ENCODE measurements at regions of chr11 and their contacts with region 1.

Region 1: DNA sequence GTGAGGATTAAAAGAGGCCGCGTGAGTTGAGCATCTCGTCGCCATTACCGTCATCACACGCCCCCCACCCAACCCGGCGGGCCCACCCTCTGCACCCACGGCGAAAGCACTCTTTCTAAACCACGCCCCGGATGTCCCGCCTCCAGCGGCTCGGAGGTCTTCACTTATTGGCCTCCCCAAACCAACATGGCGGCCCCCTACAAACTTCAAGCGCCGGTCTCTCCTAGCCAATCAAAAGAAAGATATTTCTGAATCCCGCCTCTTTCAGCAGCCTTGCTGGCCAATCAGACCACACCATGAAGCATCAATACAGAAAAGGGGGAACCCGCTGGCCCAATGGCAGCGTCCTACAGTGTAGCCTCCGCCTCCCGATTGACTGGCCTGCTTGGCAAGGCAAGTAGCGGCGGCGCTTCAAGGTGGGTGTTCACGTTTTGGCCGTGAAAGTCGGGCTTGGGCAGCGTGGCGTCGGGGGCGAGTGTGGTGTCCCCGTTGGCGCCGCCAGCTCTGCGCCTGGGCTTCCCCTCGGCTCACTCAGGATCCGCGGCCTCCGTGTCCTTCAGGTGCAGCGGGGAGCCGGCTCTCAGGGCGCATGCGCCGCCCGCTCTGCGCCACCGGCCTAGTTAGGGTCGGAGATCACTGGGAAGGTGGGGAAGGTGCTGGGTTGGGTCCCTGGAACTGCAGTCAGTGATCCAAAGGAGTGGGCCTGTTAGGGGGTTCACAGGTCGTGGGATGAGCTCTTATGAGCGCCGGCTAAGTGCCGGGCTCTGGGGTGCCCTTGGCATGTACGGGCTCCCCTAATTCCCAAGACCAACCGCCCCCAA is at the start of gene NDUFS8:
- DNase-seq: peak; percentile 90 to 98 (median 96)
- ATAC-seq: peak; percentile 95
- H3K4me3 ChIP-seq: peak within 1 kb of the TSS; percentile 73 to 90
- H3K4me3 Mint-ChIP-seq: peak within 1 kb of the TSS; percentile 97
- H3K27ac ChIP-seq: peak within 1 kb of the TSS; percentile 71 to 74
- H3K27ac Mint-ChIP-seq: peak within 1 kb of the TSS; percentile 92
- H3K4me1 ChIP-seq: peaks cover 14% of the 10 kb centered on the region
- H3K4me1 Mint-ChIP-seq: peaks cover 16% of the 10 kb centered on the region
- H3K27me3 ChIP-seq: no peaks in the 10 kb centered on the region
- H3K27me3 Mint-ChIP-seq: no peaks in the 10 kb centered on the region
- CTCF ChIP-seq: no peak
- total RNA-seq, gene NDUFS8: 59.4 to 63.2 TPM

Region 2: GRCh38 chr11:67118801-67119584 is 911.5 kb before region 1 on chr11 and contains the start of gene KDM2A:
- CTCF ChIA-PET with region 1: no interaction called
- POLR2A ChIA-PET with region 1: no interaction called
- intact Hi-C with region 1: loop called in 1 of 2 experiments (anchors 5 kb)
- DNase-seq: peak; percentile 98 to 100 (median 99)
- ATAC-seq: peak; percentile 81
- H3K4me3 ChIP-seq: peak within 1 kb of the TSS; percentile 62 to 80
- H3K4me3 Mint-ChIP-seq: peak within 1 kb of the TSS; percentile 97
- H3K27ac ChIP-seq: peak within 1 kb of the TSS; percentile 78 to 92
- H3K27ac Mint-ChIP-seq: peak within 1 kb of the TSS; percentile 96
- H3K4me1 ChIP-seq: peaks cover 34% of the 10 kb centered on the region
- H3K4me1 Mint-ChIP-seq: peaks cover 40% of the 10 kb centered on the region
- H3K27me3 ChIP-seq: no peaks in the 10 kb centered on the region
- H3K27me3 Mint-ChIP-seq: no peaks in the 10 kb centered on the region
- CTCF ChIP-seq: no peak
- total RNA-seq, gene KDM2A: 412 to 431 TPM

Region 3: GRCh38 chr11:68003846-68004550 is 26.5 kb before region 1 on chr11 and contains the start of gene UNC93B1:
- CTCF ChIA-PET with region 1: no interaction called
- POLR2A ChIA-PET with region 1: interaction called, 3 read pairs
- intact Hi-C with region 1: loop called (anchors 1 kb)
- DNase-seq: peak; percentile 54 to 88 (median 77)
- ATAC-seq: peak; percentile 79
- H3K4me3 ChIP-seq: peak within 1 kb of the TSS; percentile 54 to 59
- H3K4me3 Mint-ChIP-seq: peak within 1 kb of the TSS; percentile 85
- H3K27ac ChIP-seq: peak within 1 kb of the TSS in 1 of 2 experiments; percentile 36
- H3K27ac Mint-ChIP-seq: peak within 1 kb of the TSS; percentile 72
- H3K4me1 ChIP-seq: peaks cover 7% of the 10 kb centered on the region
- H3K4me1 Mint-ChIP-seq: peaks cover 19% of the 10 kb centered on the region
- H3K27me3 ChIP-seq: no peaks in the 10 kb centered on the region
- H3K27me3 Mint-ChIP-seq: no peaks in the 10 kb centered on the region
- CTCF ChIP-seq: no peak
- total RNA-seq, gene UNC93B1: 14.4 to 15.6 TPM

Region 4: GRCh38 chr11:68121067-68121899 is 90.8 kb after region 1 on chr11 and contains the start of gene CHKA:
- CTCF ChIA-PET with region 1: no interaction called
- POLR2A ChIA-PET with region 1: no interaction called
- intact Hi-C with region 1: loop called (anchors 1 to 2 kb)
- DNase-seq: peak; percentile 61 to 92 (median 80)
- ATAC-seq: peak; percentile 82
- H3K4me3 ChIP-seq: peak within 1 kb of the TSS; percentile 57 to 64
- H3K4me3 Mint-ChIP-seq: peak within 1 kb of the TSS; percentile 81
- H3K27ac ChIP-seq: peak within 1 kb of the TSS; percentile 56 to 64
- H3K27ac Mint-ChIP-seq: peak within 1 kb of the TSS; percentile 83
- H3K4me1 ChIP-seq: peaks cover 15% of the 10 kb centered on the region
- H3K4me1 Mint-ChIP-seq: peaks cover 12% of the 10 kb centered on the region
- H3K27me3 ChIP-seq: no peaks in the 10 kb centered on the region
- H3K27me3 Mint-ChIP-seq: no peaks in the 10 kb centered on the region
- CTCF ChIP-seq: no peak
- total RNA-seq, gene CHKA: 50.2 to 54.6 TPM

Region 5: DNA sequence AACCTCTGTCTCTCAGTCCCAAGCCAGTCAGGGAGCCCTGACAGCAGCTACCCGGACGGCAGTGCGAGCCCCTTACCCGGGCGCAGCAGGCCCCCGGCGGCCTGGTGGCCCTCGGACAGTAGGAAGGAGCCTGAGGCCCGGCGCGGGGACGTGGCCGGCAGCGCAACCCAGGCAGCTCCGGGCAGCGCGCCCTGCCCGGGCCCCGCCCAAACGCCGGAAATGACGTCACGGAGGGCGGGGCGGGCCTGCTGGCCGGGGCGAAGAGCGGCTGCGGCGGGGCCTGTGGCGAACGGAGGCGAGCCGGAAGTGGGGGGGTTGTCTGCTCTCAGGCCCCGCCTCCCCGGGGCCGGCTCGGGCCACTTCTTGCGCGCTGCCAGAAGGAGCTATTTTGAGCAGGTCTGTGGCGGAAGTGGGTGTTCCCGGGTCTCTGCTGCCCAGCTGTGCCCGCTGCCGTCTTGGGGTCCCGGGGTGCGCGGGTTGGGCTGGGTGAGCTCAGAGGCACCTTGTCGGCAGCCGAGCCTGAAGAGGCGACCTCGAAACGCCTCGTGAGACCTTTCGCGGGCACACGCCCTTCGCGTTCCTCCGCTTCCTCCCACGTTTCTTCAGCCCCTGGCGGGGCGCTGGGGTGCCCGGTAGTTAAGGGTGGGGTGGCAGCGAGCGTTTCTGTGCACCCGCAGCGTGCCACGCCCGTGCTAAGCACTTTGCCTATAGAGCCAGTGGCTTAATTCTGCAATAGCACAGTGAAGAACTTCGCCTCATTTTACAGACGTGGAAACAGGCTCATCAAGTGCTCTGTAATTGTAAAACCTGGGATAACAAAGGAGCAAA is 241.5 kb after region 1 on chr11 and contains the start of gene C11orf24:
- CTCF ChIA-PET with region 1: no interaction called
- POLR2A ChIA-PET with region 1: no interaction called
- intact Hi-C with region 1: loop called in 1 of 2 experiments (anchors 1 kb)
- DNase-seq: peak; percentile 81 to 97 (median 93)
- ATAC-seq: peak; percentile 86
- H3K4me3 ChIP-seq: peak within 1 kb of the TSS; percentile 71 to 95
- H3K4me3 Mint-ChIP-seq: peak within 1 kb of the TSS; percentile 91
- H3K27ac ChIP-seq: peak within 1 kb of the TSS; percentile 93 to 97
- H3K27ac Mint-ChIP-seq: peak within 1 kb of the TSS; percentile 95
- H3K4me1 ChIP-seq: peaks cover 26% of the 10 kb centered on the region
- H3K4me1 Mint-ChIP-seq: peaks cover 32% of the 10 kb centered on the region
- H3K27me3 ChIP-seq: no peaks in the 10 kb centered on the region
- H3K27me3 Mint-ChIP-seq: no peaks in the 10 kb centered on the region
- CTCF ChIP-seq: no peak
- total RNA-seq, gene C11orf24: 6.5 to 8.2 TPM

Region 6: DNA sequence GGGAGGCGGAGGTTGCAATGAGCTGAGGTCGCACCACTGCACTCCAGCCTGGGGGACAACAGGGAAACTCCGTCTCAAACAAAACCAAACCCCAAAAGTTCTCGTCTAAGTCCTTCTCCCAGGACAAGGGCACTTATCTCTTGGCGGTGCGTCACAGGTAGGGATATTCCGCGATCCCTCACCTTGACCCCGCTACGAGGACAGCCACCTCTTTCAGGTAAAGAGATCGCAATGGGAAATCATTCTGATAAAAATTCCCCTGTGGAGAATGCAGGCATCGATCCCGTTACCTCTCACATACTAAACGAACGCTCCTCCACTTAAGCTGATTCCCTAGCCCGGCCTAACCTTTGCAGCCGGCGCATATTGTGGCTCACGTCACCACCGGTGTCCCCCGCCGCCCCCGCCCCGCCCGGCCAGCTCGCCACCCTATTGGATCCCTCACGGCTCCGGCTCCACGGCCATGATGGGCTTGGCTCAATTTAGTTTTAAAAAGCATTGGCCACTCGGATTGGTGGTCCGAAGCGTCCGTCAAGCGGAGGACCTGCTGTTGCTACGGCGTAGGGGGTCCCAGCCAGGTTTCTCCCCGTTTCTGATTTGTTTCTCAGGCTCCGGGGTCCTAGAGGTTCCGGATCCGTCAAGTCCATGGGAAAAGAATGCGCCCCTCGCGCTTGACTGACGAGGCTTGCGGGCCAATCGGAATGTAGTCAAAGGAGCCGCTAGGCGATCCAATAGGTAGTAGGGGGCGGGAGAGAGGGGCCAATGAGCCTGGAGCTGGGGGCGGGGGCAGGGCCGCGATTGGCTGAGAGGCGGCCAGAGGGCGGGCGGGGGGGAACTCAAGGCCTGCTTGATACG is 429.6 kb after region 1 on chr11:
- CTCF ChIA-PET with region 1: no interaction called
- POLR2A ChIA-PET with region 1: no interaction called
- intact Hi-C with region 1: loop called in 1 of 2 experiments (anchors 2 kb)
- DNase-seq: peak; percentile 90 to 98 (median 94)
- ATAC-seq: peak; percentile 91
- H3K4me3 ChIP-seq: peak overlapping the region; percentile 92 to 95
- H3K4me3 Mint-ChIP-seq: peak overlapping the region; percentile 97
- H3K27ac ChIP-seq: peak overlapping the region; percentile 95 to 98
- H3K27ac Mint-ChIP-seq: peak overlapping the region; percentile 98
- H3K4me1 ChIP-seq: peaks cover 35% of the 10 kb centered on the region
- H3K4me1 Mint-ChIP-seq: peaks cover 38% of the 10 kb centered on the region
- H3K27me3 ChIP-seq: no peaks in the 10 kb centered on the region
- H3K27me3 Mint-ChIP-seq: no peaks in the 10 kb centered on the region
- CTCF ChIP-seq: no peak

Measured in CD8-positive, alpha-beta T cell (primary cell).